Mammary epithelial cell (primary cell): ENCODE measurements at regions of chr5 and their contacts with region 1.

Region 1: DNA sequence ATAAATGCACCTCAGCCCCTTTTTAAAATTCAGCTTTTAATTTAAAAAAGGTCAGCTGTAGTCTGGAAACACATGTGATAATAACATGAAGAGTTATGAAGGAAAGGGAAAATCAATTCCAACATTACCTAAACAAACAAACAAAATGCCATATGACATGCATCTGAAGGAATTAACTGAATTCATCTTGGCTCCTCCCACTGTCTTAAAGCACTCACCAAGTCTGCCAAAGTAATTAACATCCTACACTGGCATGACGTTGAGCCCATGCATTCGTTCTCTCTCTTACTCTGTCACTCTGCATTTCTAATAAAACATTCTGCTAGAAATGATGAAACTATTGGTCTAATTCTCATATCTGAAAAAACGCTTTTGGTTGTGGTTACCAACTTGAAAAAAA is 37.7 kb downstream of the TSSK1B start:
- DNase-seq: no peak
- H3K4me3 ChIP-seq: no peak overlapping the region
- H3K27ac ChIP-seq: no peak overlapping the region
- H3K4me1 ChIP-seq: no peaks in the 10 kb centered on the region
- H3K27me3 ChIP-seq: no peaks in the 10 kb centered on the region
- CTCF ChIP-seq: no peak

Region 2: GRCh38 chr5:113447498-113448050 is 50.5 kb after region 1 on chr5:
- CTCF ChIA-PET with region 1: no interaction called
- dilution Hi-C with region 1: no loop called
- in situ Hi-C with region 1: no loop called
- intact Hi-C with region 1: no loop called
- DNase-seq: no peak
- H3K4me3 ChIP-seq: no peak overlapping the region
- H3K27ac ChIP-seq: no peak overlapping the region
- H3K4me1 ChIP-seq: no peaks in the 10 kb centered on the region
- H3K27me3 ChIP-seq: no peaks in the 10 kb centered on the region
- CTCF ChIP-seq: no peak

Region 3: GRCh38 chr5:113478691-113479090 is 81.6 kb after region 1 on chr5:
- CTCF ChIA-PET with region 1: no interaction called
- dilution Hi-C with region 1: loop called (anchors 5 kb)
- in situ Hi-C with region 1: no loop called
- intact Hi-C with region 1: no loop called
- DNase-seq: no peak
- H3K4me3 ChIP-seq: no peak overlapping the region
- H3K27ac ChIP-seq: no peak overlapping the region
- H3K4me1 ChIP-seq: peaks cover 4% of the 10 kb centered on the region
- H3K27me3 ChIP-seq: no peaks in the 10 kb centered on the region
- CTCF ChIP-seq: no peak

Region 4: DNA sequence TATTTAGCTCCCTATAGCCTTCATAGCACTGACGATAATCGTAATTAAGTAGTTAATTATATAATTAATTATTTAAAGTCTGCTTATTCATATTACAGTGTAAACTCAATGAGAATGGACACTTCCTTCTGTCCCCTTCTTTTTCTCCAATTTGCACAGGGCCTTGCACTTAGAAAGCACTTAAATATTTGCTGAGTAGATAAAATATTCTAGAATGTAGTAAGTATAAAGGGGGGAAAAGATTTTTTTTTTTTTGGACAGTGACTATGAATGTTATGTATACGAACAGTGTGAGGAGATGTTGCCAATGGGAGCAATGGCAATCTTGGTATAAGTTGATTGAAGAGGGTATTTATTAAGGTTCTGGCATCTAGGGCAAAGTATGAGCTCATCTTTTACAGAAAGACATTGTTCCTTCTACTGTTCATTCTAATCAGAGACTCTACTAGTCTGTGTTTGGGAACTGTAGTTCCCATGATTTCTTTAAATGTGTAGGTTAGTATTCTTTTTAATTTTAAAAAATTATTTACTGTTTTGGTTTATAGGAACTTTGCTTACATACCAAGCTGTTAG is 165.9 kb after region 1 on chr5:
- CTCF ChIA-PET with region 1: no interaction called
- dilution Hi-C with region 1: no loop called
- in situ Hi-C with region 1: no loop called
- intact Hi-C with region 1: no loop called
- DNase-seq: no peak
- H3K4me3 ChIP-seq: no peak overlapping the region
- H3K27ac ChIP-seq: no peak overlapping the region
- H3K4me1 ChIP-seq: no peaks in the 10 kb centered on the region
- H3K27me3 ChIP-seq: no peaks in the 10 kb centered on the region
- CTCF ChIP-seq: no peak